Left colon (tissue), 2 donors: ENCODE measurements at regions of chr1 and their contacts with region 1.

Region 1: GRCh38 chr1:184069675-184070074 is 18.1 kb downstream of the TSEN15 start:
- DNase-seq: no peak
- ATAC-seq: no peak

Region 2: GRCh38 chr1:184152434-184152898 is 82.8 kb after region 1 on chr1:
- intact Hi-C with region 1: no loop called
- DNase-seq: peak in 1 of 2 donors; percentile 13
- ATAC-seq: no peak

Region 3: GRCh38 chr1:184215274-184215925 is 145.7 kb after region 1 on chr1:
- intact Hi-C with region 1: loop called in 1 of 2 experiments (anchors 5 kb)
- DNase-seq: no peak
- ATAC-seq: no peak